Naive thymus-derived CD8-positive, alpha-beta T cell (primary cell): ENCODE measurements at regions of chr16 and their contacts with region 1.

Region 1: GRCh38 chr16:75432828-75433731 is at the start of gene CFDP1:
- DNase-seq: peak; percentile 90 to 98 (median 96)
- ATAC-seq: peak; percentile 85 to 86
- H3K4me3 Mint-ChIP-seq: peak within 1 kb of the TSS; percentile 90 to 97 (median 94)
- H3K27ac Mint-ChIP-seq: peak within 1 kb of the TSS; percentile 94 to 99 (median 96)
- H3K4me1 Mint-ChIP-seq: peaks cover 20 to 53% (median 44%) of the 10 kb centered on the region in 4 donors
- H3K27me3 Mint-ChIP-seq: no peaks in the 10 kb centered on the region
- polyA plus RNA-seq, gene CFDP1: 34.3 to 36.8 (median 34.5) TPM

Region 2: DNA sequence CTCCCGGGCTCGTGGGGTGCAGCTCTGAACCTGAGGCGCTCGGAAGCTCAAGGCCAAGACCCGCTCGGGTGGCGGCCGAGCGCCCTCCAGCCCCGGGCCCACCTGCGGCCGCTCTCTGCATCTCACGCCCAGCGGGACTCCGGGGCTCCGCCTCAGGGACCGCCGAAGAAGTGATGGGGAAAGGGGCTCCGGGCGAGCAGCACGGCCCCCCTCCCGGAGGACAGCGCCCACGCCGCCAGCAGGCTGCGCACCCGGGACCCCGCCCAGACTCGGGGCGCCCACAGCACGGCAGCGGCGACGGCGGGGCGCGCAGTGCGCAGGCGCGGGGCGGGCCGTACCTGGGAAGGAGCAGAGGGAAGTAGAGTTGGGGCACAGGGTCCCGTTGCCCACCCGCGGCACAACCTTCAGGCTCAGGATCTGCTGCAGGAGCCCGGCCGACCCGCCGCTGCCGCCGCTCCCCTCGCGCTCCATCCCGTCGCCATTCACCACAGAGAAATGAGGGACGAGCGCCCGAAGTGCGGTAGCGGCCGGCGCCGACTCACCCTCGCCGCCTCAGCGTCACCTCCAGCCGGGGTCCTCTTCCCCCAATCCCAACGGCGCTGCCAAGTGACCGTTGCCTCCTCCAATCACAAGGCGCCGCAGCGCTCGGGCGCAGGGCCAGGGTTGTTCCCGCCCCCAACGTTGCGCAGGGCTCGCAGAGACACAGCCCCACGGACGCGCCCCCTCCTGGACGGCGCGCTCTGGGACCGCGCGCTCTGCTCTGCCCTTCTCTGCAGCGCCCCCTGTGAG is 31.2 kb after region 1 on chr16 and contains the start of gene TMEM170A:
- POLR2A ChIA-PET with region 1: interaction called, 43 read pairs
- DNase-seq: peak; percentile 96 to 99 (median 99)
- ATAC-seq: peak; percentile 89 to 91
- H3K4me3 Mint-ChIP-seq: peak within 1 kb of the TSS; percentile 88 to 97 (median 94)
- H3K27ac Mint-ChIP-seq: peak within 1 kb of the TSS; percentile 81 to 98 (median 96)
- H3K4me1 Mint-ChIP-seq: peaks cover 25 to 51% (median 48%) of the 10 kb centered on the region in 4 donors
- H3K27me3 Mint-ChIP-seq: no peaks in the 10 kb centered on the region
- polyA plus RNA-seq, gene TMEM170A: 32.8 to 45.1 (median 33.8) TPM

Region 3: GRCh38 chr16:75676909-75677308 is 243.8 kb after region 1 on chr16 and contains the start of gene CPHXL2:
- POLR2A ChIA-PET with region 1: no interaction called
- DNase-seq: no peak
- ATAC-seq: no peak
- H3K4me3 Mint-ChIP-seq: no peak within 1 kb of the TSS
- H3K27ac Mint-ChIP-seq: peak within 1 kb of the TSS in 2 of 10 donors; percentile 8 to 43
- H3K4me1 Mint-ChIP-seq: no peaks in the 10 kb centered on the region
- H3K27me3 Mint-ChIP-seq: no peaks in the 10 kb centered on the region
- polyA plus RNA-seq, gene CPHXL2: not detected